ENCODE measurements at regions of chr13 and their contacts with region 1.

Region 1: GRCh38 chr13:36858290-36858689 is 39.3 kb downstream of the RFXAP start:
- DNase-seq: peak; percentile 69
- ATAC-seq: peak; percentile 95
- H3K4me3 ChIP-seq: no peak overlapping the region
- H3K27ac ChIP-seq: no peak overlapping the region
- H3K4me1 ChIP-seq: peaks cover 11% of the 10 kb centered on the region
- H3K27me3 ChIP-seq: no peaks in the 10 kb centered on the region
- CTCF ChIP-seq: peak; percentile 82
- EP300 ChIP-seq: no peak
- POLR2A ChIP-seq: no peak
- RAD21 ChIP-seq: peak; percentile 78

Region 2: GRCh38 chr13:36841391-36841790 is 16.9 kb before region 1 on chr13:
- CTCF ChIA-PET with region 1: no interaction called
- POLR2A ChIA-PET with region 1: no interaction called
- in situ Hi-C with region 1: no loop called
- intact Hi-C with region 1: no loop called
- DNase-seq: no peak
- ATAC-seq: no peak
- H3K4me3 ChIP-seq: no peak overlapping the region
- H3K27ac ChIP-seq: no peak overlapping the region
- H3K4me1 ChIP-seq: no peaks in the 10 kb centered on the region
- H3K27me3 ChIP-seq: no peaks in the 10 kb centered on the region
- CTCF ChIP-seq: no peak
- EP300 ChIP-seq: no peak
- POLR2A ChIP-seq: no peak
- RAD21 ChIP-seq: no peak

Region 3: GRCh38 chr13:36919833-36920615 is 61.7 kb after region 1 on chr13 and contains the start of gene SMAD9:
- CTCF ChIA-PET with region 1: no interaction called
- POLR2A ChIA-PET with region 1: no interaction called
- in situ Hi-C with region 1: no loop called
- intact Hi-C with region 1: loop called (anchors 1 kb)
- DNase-seq: peak; percentile 50
- ATAC-seq: peak; percentile 77
- H3K4me3 ChIP-seq: peak within 1 kb of the TSS; percentile 69 to 82 (median 80)
- H3K27ac ChIP-seq: peak within 1 kb of the TSS; percentile 70
- H3K4me1 ChIP-seq: peaks cover 60% of the 10 kb centered on the region
- H3K27me3 ChIP-seq: no peaks in the 10 kb centered on the region
- CTCF ChIP-seq: no peak
- EP300 ChIP-seq: no peak
- POLR2A ChIP-seq: 0 out of 4 replicates have a peak, but pooled peaks of 1 of the 2 experiments have one; percentile 19
- RAD21 ChIP-seq: peak; percentile 52
- total RNA-seq, gene SMAD9: 4.2 and 6.3 TPM in 2 replicates

Measured in HepG2 (cell line).